ENCODE measurements at regions of chr11 and their contacts with region 1.

Region 1: GRCh38 chr11:14578541-14578956 is 58.4 kb upstream of the PSMA1 start:
- DNase-seq: peak; percentile 92
- H3K4me3 Mint-ChIP-seq: peak overlapping the region; percentile 74
- H3K27ac Mint-ChIP-seq: peak overlapping the region; percentile 90
- H3K4me1 Mint-ChIP-seq: peaks cover 51% of the 10 kb centered on the region
- H3K27me3 Mint-ChIP-seq: no peaks in the 10 kb centered on the region

Region 2: GRCh38 chr11:13462901-13463778 is 1115.4 kb before region 1 on chr11 and contains the start of gene BTBD10:
- intact Hi-C with region 1: loop called (anchors 10 kb)
- DNase-seq: peak; percentile 98
- H3K4me3 Mint-ChIP-seq: peak within 1 kb of the TSS; percentile 98
- H3K27ac Mint-ChIP-seq: peak within 1 kb of the TSS; percentile 97
- H3K4me1 Mint-ChIP-seq: peaks cover 30% of the 10 kb centered on the region
- H3K27me3 Mint-ChIP-seq: no peaks in the 10 kb centered on the region
- total RNA-seq, gene BTBD10: 20.3 and 21.8 TPM in 2 replicates

Region 3: GRCh38 chr11:14544611-14545010 is 33.9 kb before region 1 on chr11:
- intact Hi-C with region 1: loop called (anchors 1 kb)
- DNase-seq: peak; percentile 65
- H3K4me3 Mint-ChIP-seq: peak overlapping the region; percentile 61
- H3K27ac Mint-ChIP-seq: peak overlapping the region; percentile 94
- H3K4me1 Mint-ChIP-seq: peaks cover 49% of the 10 kb centered on the region
- H3K27me3 Mint-ChIP-seq: no peaks in the 10 kb centered on the region

Region 4: GRCh38 chr11:14611939-14612338 is 33.4 kb after region 1 on chr11:
- intact Hi-C with region 1: loop called (anchors 2 kb)
- DNase-seq: no peak
- H3K4me3 Mint-ChIP-seq: no peak overlapping the region
- H3K27ac Mint-ChIP-seq: peak overlapping the region; percentile 79
- H3K4me1 Mint-ChIP-seq: peaks cover 31% of the 10 kb centered on the region
- H3K27me3 Mint-ChIP-seq: no peaks in the 10 kb centered on the region

Measured in activated CD4-positive, alpha-beta T cell treated with anti-CD3 and anti-CD28 coated beads, Interleukin-2, amount 10 ng/mL, durations not matched to agents 24 days and 14 days (primary cell).